Panc1 (cell line): ENCODE measurements at regions of chr1 and their contacts with region 1.

Region 1: GRCh38 chr1:84742653-84743052 is 52.4 kb upstream of the SSX2IP start:
- DNase-seq: no peak
- ATAC-seq: no peak
- H3K4me3 ChIP-seq: no peak overlapping the region
- H3K27ac ChIP-seq: no peak overlapping the region
- H3K4me1 ChIP-seq: no peaks in the 10 kb centered on the region
- H3K27me3 ChIP-seq: peaks cover 5% of the 10 kb centered on the region
- CTCF ChIP-seq: no peak

Region 2: DNA sequence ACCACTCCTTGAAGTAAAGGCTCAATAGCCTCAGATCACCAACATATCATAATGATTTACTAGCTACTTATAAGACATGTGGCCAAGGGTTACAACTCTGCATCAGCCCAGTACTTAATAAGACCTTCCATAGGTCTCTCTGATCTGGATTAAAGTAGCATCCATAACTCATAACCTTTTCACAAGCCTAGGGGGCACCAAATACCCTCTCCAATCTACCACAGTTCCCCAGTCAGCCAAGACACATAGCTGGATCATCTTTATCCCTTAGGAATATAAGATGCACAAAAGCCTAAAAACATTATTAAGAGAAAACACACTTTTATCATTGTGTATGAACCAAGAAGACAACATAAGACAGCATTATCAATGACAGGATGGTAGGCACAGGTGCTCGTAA is 74.5 kb before region 1 on chr1:
- CTCF ChIA-PET with region 1: no interaction called
- POLR2A ChIA-PET with region 1: no interaction called
- in situ Hi-C with region 1: no loop called
- intact Hi-C with region 1: no loop called
- DNase-seq: no peak
- ATAC-seq: peak; percentile 82; the same call in 1 of the 2 replicates
- H3K4me3 ChIP-seq: no peak overlapping the region
- H3K27ac ChIP-seq: no peak overlapping the region
- H3K4me1 ChIP-seq: no peaks in the 10 kb centered on the region
- H3K27me3 ChIP-seq: no peaks in the 10 kb centered on the region
- CTCF ChIP-seq: peak; percentile 61

Region 3: DNA sequence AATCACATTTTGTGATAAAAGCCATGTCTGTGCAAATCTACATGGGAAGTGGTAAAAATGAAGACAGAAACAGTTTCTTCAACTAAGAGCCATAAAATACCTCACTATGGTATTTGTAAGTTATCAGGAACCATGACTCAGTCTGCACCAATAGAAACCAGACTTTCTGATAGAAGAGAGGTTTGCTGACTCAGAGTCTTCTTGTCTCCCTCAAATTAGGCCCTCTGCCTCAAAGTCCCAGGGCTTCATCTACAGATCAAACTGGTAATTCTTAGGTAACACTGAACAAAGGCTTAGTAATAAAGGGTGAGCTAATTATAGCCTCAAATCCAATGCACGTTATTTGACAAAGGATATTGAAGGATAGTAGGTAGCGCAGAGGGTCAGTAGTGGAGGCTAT is 21.5 kb before region 1 on chr1:
- CTCF ChIA-PET with region 1: interaction called, 15 read pairs
- POLR2A ChIA-PET with region 1: no interaction called
- in situ Hi-C with region 1: no loop called
- intact Hi-C with region 1: no loop called
- DNase-seq: no peak
- ATAC-seq: no peak
- H3K4me3 ChIP-seq: no peak overlapping the region
- H3K27ac ChIP-seq: no peak overlapping the region
- H3K4me1 ChIP-seq: no peaks in the 10 kb centered on the region
- H3K27me3 ChIP-seq: peaks cover 10% of the 10 kb centered on the region; the same call in 1 of the 2 replicates
- CTCF ChIP-seq: no peak

Region 4: DNA sequence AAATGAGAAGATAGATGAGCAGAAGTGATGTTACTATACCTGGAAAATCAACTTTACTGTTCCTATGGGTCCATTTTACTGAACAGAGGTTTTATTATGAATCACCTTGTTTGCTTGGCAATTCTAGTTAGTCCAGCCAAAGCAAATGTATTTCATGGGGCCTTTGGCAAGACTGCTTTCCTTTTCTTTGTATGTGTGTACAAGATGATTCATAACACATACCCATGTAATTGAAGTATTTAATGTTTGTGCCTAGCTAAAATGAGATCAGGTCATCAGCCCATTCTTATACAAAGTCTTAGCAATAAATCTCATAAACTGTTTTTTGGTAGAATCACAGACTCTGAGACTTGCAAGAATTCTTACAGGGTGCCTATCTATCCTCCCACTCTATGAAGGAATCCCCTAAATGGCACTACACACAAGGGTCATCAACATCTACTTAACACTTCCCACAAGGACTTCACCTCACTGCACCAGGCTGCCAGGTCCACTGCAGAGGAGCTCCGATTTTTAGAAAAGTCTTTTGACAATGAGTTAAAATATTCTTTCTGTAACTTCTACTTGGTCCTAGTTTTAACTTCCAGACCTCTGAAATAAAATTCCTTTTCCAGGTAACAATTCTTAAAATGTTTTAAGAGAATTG is 91.9 kb after region 1 on chr1:
- CTCF ChIA-PET with region 1: no interaction called
- POLR2A ChIA-PET with region 1: no interaction called
- in situ Hi-C with region 1: no loop called
- intact Hi-C with region 1: no loop called
- DNase-seq: peak; percentile 88
- ATAC-seq: peak; percentile 90
- H3K4me3 ChIP-seq: no peak overlapping the region
- H3K27ac ChIP-seq: peak overlapping the region; percentile 48; the same call in 1 of the 2 replicates
- H3K4me1 ChIP-seq: peaks cover 32% of the 10 kb centered on the region
- H3K27me3 ChIP-seq: no peaks in the 10 kb centered on the region
- CTCF ChIP-seq: no peak